Activated naive CD4-positive, alpha-beta T cell treated with anti-CD3 and anti-CD28 coated beads, Interleukin-2, amount 10 ng/mL, durations not matched to agents 7 days and 5 days (primary cell): ENCODE measurements at regions of chr7 and their contacts with region 1.

Region 1: DNA sequence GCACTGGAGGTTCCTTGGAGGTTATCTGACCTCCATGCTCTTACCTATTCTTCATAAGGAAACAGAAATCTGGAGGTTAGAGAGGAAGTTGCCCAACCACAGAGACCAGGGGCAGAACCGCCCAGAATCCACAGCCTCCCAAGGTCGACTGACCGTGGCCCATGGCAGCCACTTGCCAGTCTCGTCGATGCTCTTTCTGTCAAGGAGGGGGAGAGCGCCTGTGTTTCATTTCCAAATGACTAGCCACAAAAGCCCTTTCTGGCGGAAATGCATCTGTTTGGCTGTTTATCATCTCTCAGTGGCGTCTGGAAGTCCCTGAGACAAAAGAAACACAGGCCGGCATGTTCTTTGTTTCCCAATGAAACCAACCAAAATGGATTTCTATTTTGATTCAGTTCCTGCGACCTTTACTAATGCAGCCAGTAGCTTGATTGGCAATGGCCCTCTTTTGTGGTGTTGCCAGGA is 2.9 kb downstream of the RAMP3 start:
- DNase-seq: peak; percentile 17
- H3K4me3 Mint-ChIP-seq: no peak overlapping the region
- H3K27ac Mint-ChIP-seq: no peak overlapping the region
- H3K4me1 Mint-ChIP-seq: peaks cover 11% of the 10 kb centered on the region
- H3K27me3 Mint-ChIP-seq: peaks cover 73% of the 10 kb centered on the region

Region 2: DNA sequence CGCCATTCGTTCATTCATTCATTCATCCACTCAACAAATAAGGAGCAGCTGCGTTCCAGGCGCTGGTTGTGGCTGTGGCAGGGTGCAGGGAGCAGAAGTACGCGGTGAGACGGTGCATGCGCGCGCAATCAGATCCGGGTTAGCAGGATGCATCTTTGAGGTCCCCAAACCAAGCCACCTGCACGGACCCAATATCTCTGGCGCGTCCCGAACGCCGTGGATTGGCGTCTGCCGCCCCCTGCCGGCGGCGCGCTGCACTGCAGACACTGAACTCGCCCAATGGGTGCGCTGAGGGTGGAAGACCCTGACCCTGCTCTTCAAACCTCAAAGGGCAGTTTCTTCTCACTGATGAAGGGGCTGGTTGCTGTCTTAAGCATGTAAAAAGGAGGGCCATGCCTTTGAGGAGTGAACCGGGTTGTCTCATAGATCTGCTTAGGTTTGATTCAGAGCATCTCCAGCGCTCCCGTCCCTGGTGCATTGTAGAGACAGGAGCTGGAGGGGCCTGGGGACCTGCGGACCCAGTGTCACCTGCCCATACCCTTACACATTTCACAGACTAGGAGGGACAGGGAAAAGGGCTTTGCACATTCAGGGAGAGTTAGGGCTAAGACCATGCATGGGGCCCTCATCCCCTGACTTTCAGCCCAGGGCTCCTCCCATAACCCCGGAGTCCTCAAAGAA is 99.7 kb after region 1 on chr7:
- CTCF ChIA-PET with region 1: interaction called, 119 read pairs
- DNase-seq: peak; percentile 80
- H3K4me3 Mint-ChIP-seq: no peak overlapping the region
- H3K27ac Mint-ChIP-seq: no peak overlapping the region
- H3K4me1 Mint-ChIP-seq: peaks cover 5% of the 10 kb centered on the region
- H3K27me3 Mint-ChIP-seq: peaks cover 44% of the 10 kb centered on the region